Thyroid gland (tissue), 4 donors: ENCODE measurements at regions of chr2 and their contacts with region 1.

Region 1: GRCh38 chr2:191155608-191156071 is 4.8 kb upstream of the STAT4 start:
- DNase-seq: no peak
- H3K4me3 ChIP-seq: no peak overlapping the region
- H3K27ac ChIP-seq: no peak overlapping the region
- H3K4me1 ChIP-seq: peaks cover 0 to 8% of the 10 kb centered on the region in 2 donors
- H3K27me3 ChIP-seq: no peaks in the 10 kb centered on the region
- CTCF ChIP-seq: peak in 4 of 6 experiments; percentile 34 to 61 (median 52)
- POLR2A ChIP-seq: no peak

Region 2: GRCh38 chr2:191051825-191052778 is 103.5 kb before region 1 on chr2:
- intact Hi-C with region 1: loop called (anchors 5 kb)
- DNase-seq: no peak
- H3K4me3 ChIP-seq: no peak overlapping the region
- H3K27ac ChIP-seq: no peak overlapping the region
- H3K4me1 ChIP-seq: peaks cover 21 to 26% of the 10 kb centered on the region in 2 donors
- H3K27me3 ChIP-seq: no peaks in the 10 kb centered on the region
- CTCF ChIP-seq: peak in 5 of 6 experiments; percentile 17 to 76 (median 68)
- POLR2A ChIP-seq: no peak

Region 3: DNA sequence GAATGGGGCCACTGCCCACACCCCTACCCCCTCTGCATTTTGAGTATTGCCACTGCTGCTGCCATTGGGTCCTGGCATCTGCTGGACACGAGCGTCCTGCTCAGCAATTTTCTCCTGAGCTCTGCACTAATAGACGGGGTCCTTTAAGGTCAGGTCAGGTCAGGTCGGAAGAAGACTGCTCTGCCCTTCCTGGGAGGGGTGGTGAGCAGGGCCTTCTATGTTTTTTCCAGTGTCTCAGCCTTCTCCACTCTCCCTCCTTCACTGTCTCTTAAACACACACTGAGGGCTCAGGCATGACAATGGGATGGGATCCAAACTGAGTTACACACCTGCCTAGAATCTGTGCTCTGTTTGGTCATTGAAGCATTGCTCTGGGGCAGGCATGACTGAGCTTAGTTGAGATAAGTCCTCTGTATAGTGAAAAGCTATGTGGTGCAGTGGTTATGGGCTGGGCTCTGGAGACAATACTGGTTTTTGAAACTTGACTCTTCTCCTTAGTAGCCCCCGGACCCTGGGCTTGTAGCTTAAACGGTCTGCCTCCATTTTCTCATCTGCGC is 100.2 kb after region 1 on chr2:
- intact Hi-C with region 1: no loop called
- DNase-seq: peak; percentile 68 to 77
- H3K4me3 ChIP-seq: no peak overlapping the region
- H3K27ac ChIP-seq: peak overlapping the region in 2 of 3 donors; percentile 19 to 60
- H3K4me1 ChIP-seq: peaks cover 13 to 16% of the 10 kb centered on the region in 2 donors
- H3K27me3 ChIP-seq: no peaks in the 10 kb centered on the region
- CTCF ChIP-seq: no peak
- POLR2A ChIP-seq: no peak

Region 4: GRCh38 chr2:191453761-191454160 is 298.1 kb after region 1 on chr2:
- intact Hi-C with region 1: no loop called
- DNase-seq: no peak
- H3K4me3 ChIP-seq: no peak overlapping the region
- H3K27ac ChIP-seq: no peak overlapping the region
- H3K4me1 ChIP-seq: no peaks in the 10 kb centered on the region
- H3K27me3 ChIP-seq: no peaks in the 10 kb centered on the region
- CTCF ChIP-seq: no peak
- POLR2A ChIP-seq: no peak

Region 5: GRCh38 chr2:191758518-191759507 is 603.2 kb after region 1 on chr2:
- intact Hi-C with region 1: no loop called
- DNase-seq: peak; percentile 34 to 41
- H3K4me3 ChIP-seq: no peak overlapping the region
- H3K27ac ChIP-seq: no peak overlapping the region
- H3K4me1 ChIP-seq: no peaks in the 10 kb centered on the region
- H3K27me3 ChIP-seq: no peaks in the 10 kb centered on the region
- CTCF ChIP-seq: peak in 4 of 6 experiments; percentile 16 to 55 (median 36)
- POLR2A ChIP-seq: no peak